Activated naive CD4-positive, alpha-beta T cell treated with anti-CD3 and anti-CD28 coated beads for 36 hours (primary cell): ENCODE measurements at regions of chr1 and their contacts with region 1.

Region 1: DNA sequence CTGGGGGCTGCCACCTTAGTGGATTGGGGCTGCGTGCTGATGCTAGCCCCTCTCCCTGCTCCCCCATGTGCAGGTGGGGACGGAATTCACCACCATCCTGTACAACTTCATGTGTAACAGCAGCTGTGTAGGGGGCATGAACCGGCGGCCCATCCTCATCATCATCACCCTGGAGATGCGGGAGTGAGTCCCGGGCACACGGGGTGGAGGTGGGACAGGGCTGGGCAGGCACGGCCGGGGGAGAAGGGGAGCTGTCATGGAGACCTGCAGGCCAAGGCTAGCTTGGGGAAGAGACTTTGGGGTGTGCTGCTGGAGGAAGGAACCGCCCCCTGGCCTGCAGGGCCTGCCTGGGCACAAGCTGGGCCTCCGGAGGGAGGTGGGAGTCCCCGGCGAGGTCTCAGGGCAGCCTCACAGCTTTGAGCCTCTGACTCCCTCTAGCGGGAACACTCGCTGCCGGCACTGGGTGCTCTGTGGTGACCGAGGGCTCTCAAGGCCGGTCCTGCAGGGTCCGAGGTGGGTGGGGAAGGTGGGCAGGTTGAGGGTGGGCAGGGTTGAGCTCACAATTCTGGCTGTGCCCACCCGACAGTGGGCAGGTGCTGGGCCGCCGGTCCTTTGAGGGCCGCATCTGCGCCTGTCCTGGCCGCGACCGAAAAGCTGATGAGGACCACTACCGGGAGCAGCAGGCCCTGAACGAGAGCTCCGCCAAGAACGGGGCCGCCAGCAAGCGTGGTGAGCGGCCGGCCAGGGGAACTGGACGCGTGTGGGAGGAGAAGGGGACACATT is 25.0 kb upstream of the CCDC27 start:
- DNase-seq: peak; percentile 23
- H3K4me3 Mint-ChIP-seq: no peak overlapping the region
- H3K27ac Mint-ChIP-seq: no peak overlapping the region
- H3K4me1 Mint-ChIP-seq: no peaks in the 10 kb centered on the region
- H3K27me3 Mint-ChIP-seq: peaks cover 2% of the 10 kb centered on the region

Region 2: GRCh38 chr1:3453203-3453761 is 274.0 kb before region 1 on chr1:
- CTCF ChIA-PET with region 1: interaction called, 3 read pairs
- intact Hi-C with region 1: loop called (anchors 2 kb)
- DNase-seq: peak; percentile 84
- H3K4me3 Mint-ChIP-seq: peak overlapping the region; percentile 32
- H3K27ac Mint-ChIP-seq: no peak overlapping the region
- H3K4me1 Mint-ChIP-seq: peaks cover 2% of the 10 kb centered on the region
- H3K27me3 Mint-ChIP-seq: peaks cover 7% of the 10 kb centered on the region

Region 3: GRCh38 chr1:3491291-3492246 is 235.7 kb before region 1 on chr1:
- CTCF ChIA-PET with region 1: no interaction called
- intact Hi-C with region 1: loop called (anchors 1 kb)
- DNase-seq: peak; percentile 92
- H3K4me3 Mint-ChIP-seq: no peak overlapping the region
- H3K27ac Mint-ChIP-seq: no peak overlapping the region
- H3K4me1 Mint-ChIP-seq: peaks cover 5% of the 10 kb centered on the region
- H3K27me3 Mint-ChIP-seq: no peaks in the 10 kb centered on the region

Region 4: GRCh38 chr1:3564921-3565827 is 162.1 kb before region 1 on chr1:
- CTCF ChIA-PET with region 1: no interaction called
- intact Hi-C with region 1: loop called (anchors 1 kb)
- DNase-seq: peak; percentile 31
- H3K4me3 Mint-ChIP-seq: no peak overlapping the region
- H3K27ac Mint-ChIP-seq: no peak overlapping the region
- H3K4me1 Mint-ChIP-seq: no peaks in the 10 kb centered on the region
- H3K27me3 Mint-ChIP-seq: no peaks in the 10 kb centered on the region

Region 5: DNA sequence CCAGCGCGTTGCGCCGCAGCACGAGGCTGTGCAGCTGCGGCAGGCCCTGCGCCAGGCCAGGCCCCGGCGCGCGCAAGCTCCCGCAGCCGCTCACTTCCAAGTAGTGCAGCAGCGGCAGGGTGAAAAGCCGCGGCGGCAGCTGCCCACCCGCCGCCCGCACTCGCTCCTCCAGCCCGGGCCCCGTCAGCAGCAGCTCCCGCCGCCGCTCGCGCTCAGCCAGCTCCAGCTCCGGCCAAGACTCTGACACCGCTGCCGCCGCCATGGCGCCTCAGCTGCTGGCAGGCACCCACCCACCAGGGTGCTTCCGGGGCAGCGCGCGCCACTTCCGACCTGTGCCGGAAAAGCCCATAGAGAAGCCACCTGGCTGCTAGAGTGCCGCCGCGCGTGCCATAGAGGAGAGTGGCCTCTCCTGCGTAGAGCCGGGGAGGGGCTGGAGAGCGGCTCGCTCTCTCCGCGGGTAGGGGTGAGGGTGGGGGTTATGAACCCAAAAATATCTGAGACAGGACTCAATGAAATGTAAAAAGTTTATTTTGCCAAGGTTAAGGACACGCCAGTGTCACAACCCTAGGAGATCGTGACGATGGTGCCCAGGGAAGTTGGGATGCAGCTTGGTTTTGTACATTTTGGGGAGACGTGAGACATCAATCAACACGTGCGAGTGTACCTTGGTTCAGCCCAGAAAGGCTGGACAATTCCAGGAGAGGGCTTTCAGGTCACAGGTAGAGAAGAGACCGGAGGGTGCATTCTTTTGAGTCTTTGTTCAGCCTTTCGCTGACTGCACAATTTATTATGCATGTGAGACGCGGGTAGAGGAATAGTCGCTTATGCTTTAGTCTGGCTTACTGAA is 69.2 kb after region 1 on chr1 and contains the start of gene LRRC47:
- CTCF ChIA-PET with region 1: no interaction called
- intact Hi-C with region 1: no loop called
- DNase-seq: peak; percentile 96
- H3K4me3 Mint-ChIP-seq: peak within 1 kb of the TSS; percentile 95
- H3K27ac Mint-ChIP-seq: peak within 1 kb of the TSS; percentile 82
- H3K4me1 Mint-ChIP-seq: peaks cover 43% of the 10 kb centered on the region
- H3K27me3 Mint-ChIP-seq: peaks cover 9% of the 10 kb centered on the region
- total RNA-seq, gene LRRC47: 22.0 to 23.9 TPM